ENCODE measurements at regions of chr2 and their contacts with region 1.

Region 1: DNA sequence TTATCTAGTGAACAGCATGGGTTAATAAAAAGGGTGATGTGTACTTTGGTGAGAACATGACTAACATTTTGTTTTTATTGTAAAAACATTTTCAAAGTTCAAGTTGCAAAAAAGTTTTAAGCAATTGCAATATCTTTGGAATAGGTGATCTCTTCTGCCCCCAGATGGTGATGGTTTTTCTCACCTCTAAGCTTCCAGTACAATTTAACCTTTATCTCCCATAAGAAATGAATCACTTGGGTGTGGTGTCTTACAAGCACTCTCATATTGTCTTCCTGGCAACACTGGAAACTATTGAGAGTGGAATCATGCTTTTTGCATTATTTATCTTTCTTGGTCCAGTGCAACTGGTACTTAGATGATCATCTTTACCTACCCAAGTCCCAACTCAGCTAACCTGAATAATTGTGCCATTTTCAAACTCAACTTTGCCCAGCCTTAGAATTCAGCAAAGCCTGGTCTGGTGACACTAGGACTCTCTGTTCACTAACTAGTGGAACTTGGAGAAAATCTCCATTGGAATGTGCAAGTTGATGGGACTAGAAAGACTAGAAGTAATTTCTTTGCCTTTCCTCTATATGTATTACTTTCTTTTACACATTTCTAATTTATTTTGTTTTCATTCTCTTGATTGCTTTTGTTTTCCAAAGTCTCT is 964.7 kb upstream of the ZEB2 start:
- DNase-seq: no peak
- ATAC-seq: peak; percentile 44
- H3K4me3 Mint-ChIP-seq: no peak overlapping the region
- H3K27ac Mint-ChIP-seq: no peak overlapping the region
- H3K4me1 Mint-ChIP-seq: no peaks in the 10 kb centered on the region
- H3K27me3 Mint-ChIP-seq: no peaks in the 10 kb centered on the region

Region 2: GRCh38 chr2:145569108-145569507 is 84.5 kb after region 1 on chr2:
- CTCF ChIA-PET with region 1: no interaction called
- POLR2A ChIA-PET with region 1: no interaction called
- intact Hi-C with region 1: no loop called
- DNase-seq: no peak
- ATAC-seq: no peak
- H3K4me3 Mint-ChIP-seq: no peak overlapping the region
- H3K27ac Mint-ChIP-seq: no peak overlapping the region
- H3K4me1 Mint-ChIP-seq: no peaks in the 10 kb centered on the region
- H3K27me3 Mint-ChIP-seq: no peaks in the 10 kb centered on the region

Region 3: GRCh38 chr2:145623136-145623535 is 138.6 kb after region 1 on chr2:
- CTCF ChIA-PET with region 1: no interaction called
- POLR2A ChIA-PET with region 1: no interaction called
- intact Hi-C with region 1: no loop called
- DNase-seq: no peak
- ATAC-seq: no peak
- H3K4me3 Mint-ChIP-seq: no peak overlapping the region
- H3K27ac Mint-ChIP-seq: no peak overlapping the region
- H3K4me1 Mint-ChIP-seq: no peaks in the 10 kb centered on the region
- H3K27me3 Mint-ChIP-seq: no peaks in the 10 kb centered on the region

Region 4: DNA sequence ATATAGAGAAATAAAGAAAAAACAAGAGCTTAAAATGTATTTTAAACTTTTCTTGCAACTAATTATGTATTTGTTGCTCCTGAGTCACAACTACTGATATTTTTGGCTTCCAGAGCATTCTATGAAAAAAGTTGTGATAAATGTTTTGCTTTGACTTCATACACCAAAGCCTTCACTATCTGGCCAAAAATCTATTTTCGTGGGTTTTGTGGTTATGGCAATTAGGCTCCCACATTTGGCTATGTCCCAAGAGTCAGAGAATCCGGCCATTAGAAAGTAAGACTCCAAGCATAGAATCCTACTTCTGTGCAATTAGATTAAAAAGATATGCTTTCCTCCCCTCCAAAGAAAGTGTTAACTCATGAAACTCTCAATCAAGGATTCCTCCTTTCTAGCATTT is 904.2 kb after region 1 on chr2:
- CTCF ChIA-PET with region 1: no interaction called
- POLR2A ChIA-PET with region 1: no interaction called
- intact Hi-C with region 1: loop called in 1 of 2 experiments (anchors 10 kb)
- DNase-seq: no peak
- ATAC-seq: no peak
- H3K4me3 Mint-ChIP-seq: no peak overlapping the region
- H3K27ac Mint-ChIP-seq: no peak overlapping the region
- H3K4me1 Mint-ChIP-seq: no peaks in the 10 kb centered on the region
- H3K27me3 Mint-ChIP-seq: no peaks in the 10 kb centered on the region